ENCODE measurements at regions of chr4 and their contacts with region 1.

Region 1: GRCh38 chr4:140373328-140374129 is at the start of gene SCOC:
- DNase-seq: peak; percentile 91
- ATAC-seq: peak; percentile 97
- H3K4me3 Mint-ChIP-seq: no peak within 1 kb of the TSS
- H3K27ac Mint-ChIP-seq: peak within 1 kb of the TSS; percentile 73
- H3K4me1 Mint-ChIP-seq: peaks cover 19% of the 10 kb centered on the region
- H3K27me3 Mint-ChIP-seq: no peaks in the 10 kb centered on the region
- total RNA-seq, gene SCOC: 24.0 to 26.5 TPM

Region 2: GRCh38 chr4:140523857-140524742 is 150.6 kb after region 1 on chr4 and contains the start of gene ELMOD2:
- POLR2A ChIA-PET with region 1: interaction called, 14 read pairs
- DNase-seq: peak; percentile 97
- ATAC-seq: peak; percentile 100
- H3K4me3 Mint-ChIP-seq: peak within 1 kb of the TSS; percentile 81
- H3K27ac Mint-ChIP-seq: peak within 1 kb of the TSS; percentile 80
- H3K4me1 Mint-ChIP-seq: peaks cover 12% of the 10 kb centered on the region
- H3K27me3 Mint-ChIP-seq: peaks cover 4% of the 10 kb centered on the region
- total RNA-seq, gene ELMOD2: 21.8 to 22.9 TPM

Measured in activated naive CD8-positive, alpha-beta T cell treated with anti-CD3 and anti-CD28 coated beads, Interleukin-2, amount 10 ng/mL, durations not matched to agents 7 days and 5 days (primary cell).